Activated naive CD4-positive, alpha-beta T cell treated with anti-CD3 and anti-CD28 coated beads for 36 hours (primary cell): ENCODE measurements at regions of chr1 and their contacts with region 1.

Region 1: DNA sequence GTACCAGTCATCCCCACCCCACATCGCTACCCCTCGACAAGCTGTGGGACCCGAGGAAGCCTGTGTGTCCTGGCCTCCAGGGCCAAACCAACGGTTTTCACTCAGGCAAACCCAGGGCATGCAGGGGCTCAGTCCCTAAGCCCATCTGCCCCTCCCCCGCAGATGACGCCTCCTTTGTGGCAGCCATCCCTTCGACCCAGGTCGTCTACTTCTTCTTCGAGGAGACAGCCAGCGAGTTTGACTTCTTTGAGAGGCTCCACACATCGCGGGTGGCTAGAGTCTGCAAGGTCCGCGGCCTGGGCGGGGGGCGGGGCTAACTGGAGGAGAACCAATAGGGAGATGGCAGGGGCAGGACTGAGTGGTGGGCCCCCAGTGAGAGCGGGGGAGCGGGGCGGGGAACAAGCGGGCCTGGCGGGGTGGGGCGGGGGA is 7.4 kb downstream of the SEMA4A start:
- DNase-seq: peak; percentile 73
- H3K4me3 Mint-ChIP-seq: peak overlapping the region; percentile 63
- H3K27ac Mint-ChIP-seq: peak overlapping the region; percentile 83
- H3K4me1 Mint-ChIP-seq: peaks cover 69% of the 10 kb centered on the region
- H3K27me3 Mint-ChIP-seq: no peaks in the 10 kb centered on the region

Region 2: DNA sequence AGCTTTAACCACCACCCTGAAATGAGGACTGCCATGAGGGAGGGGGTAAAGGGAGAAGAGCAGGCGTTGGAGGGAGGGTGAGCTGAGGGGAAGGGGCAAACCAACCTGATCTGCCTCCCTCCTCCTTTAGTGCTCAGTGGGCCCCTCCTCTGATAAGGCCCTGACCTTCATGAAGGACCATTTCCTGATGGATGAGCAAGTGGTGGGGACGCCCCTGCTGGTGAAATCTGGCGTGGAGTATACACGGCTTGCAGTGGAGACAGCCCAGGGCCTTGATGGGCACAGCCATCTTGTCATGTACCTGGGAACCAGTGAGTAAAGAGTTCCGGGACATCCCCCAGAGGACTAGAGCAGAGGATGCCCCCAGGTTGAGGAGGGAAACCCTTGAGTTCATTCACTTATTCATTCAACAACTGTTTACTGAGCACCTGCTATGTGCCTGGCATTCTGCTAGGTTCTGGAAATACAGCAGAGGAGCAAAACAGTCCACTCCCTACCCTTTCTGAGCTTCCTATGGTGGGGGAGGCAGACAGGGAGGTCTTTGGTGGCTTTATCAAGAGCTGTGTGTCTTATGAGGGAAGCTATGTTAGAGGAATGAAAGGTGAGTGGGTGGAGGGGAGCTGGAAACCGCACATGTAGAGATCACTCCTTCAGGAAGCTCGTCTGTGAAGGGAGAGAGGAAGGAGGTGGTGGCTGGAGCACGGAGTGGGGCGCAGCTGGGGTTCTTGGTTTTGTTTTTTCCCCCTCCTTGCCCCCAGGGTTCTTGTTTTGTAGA is 12.1 kb after region 1 on chr1:
- CTCF ChIA-PET with region 1: interaction called, 14 read pairs
- intact Hi-C with region 1: no loop called
- DNase-seq: no peak
- H3K4me3 Mint-ChIP-seq: no peak overlapping the region
- H3K27ac Mint-ChIP-seq: no peak overlapping the region
- H3K4me1 Mint-ChIP-seq: peaks cover 13% of the 10 kb centered on the region
- H3K27me3 Mint-ChIP-seq: no peaks in the 10 kb centered on the region

Region 3: DNA sequence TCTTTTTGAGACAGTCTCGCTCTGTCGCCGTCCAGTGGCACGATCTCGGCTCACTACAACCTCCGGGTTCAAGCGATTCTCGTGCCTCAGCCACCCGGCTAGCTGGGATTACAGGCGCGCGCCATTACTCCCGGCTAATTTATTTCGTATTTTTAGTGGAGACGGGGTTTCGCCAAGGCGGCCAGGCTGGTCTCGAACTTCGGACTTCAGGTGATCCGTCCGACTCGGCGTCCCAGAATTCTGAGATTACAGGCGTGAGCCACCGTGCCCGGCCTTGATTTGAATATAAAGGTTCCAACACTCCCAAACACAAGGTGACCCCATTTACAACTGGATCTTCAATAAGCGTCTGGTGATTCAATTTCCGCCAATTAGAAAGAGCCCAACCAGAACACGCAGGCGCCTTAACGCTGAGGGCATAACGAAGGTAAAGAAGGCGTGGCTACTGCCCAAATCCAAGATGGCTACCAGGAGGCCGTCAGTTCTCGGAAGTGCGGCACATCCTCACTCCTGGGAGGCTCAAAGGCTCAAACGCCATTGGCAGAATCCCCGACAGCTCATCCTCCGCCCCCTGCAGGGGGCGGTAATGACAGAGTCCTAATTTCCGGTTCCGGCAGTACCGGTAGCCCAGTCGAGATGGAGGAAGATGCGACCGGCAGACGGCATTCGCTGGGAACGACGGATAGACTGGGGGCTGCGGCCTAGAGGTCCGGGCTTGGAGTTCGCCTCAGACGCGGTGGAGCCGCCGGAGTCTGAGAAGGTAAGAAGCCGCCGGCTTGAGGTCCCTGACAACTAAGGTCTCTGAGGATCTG is 32.9 kb after region 1 on chr1 and contains the start of gene SLC25A44:
- CTCF ChIA-PET with region 1: no interaction called
- intact Hi-C with region 1: loop called (anchors 1 kb)
- DNase-seq: peak; percentile 98
- H3K4me3 Mint-ChIP-seq: peak within 1 kb of the TSS; percentile 79
- H3K27ac Mint-ChIP-seq: peak within 1 kb of the TSS; percentile 74
- H3K4me1 Mint-ChIP-seq: peaks cover 59% of the 10 kb centered on the region
- H3K27me3 Mint-ChIP-seq: no peaks in the 10 kb centered on the region
- total RNA-seq, gene SLC25A44: 69.1 to 73.5 TPM

Region 4: GRCh38 chr1:156198831-156199349 is 38.1 kb after region 1 on chr1:
- CTCF ChIA-PET with region 1: no interaction called
- intact Hi-C with region 1: loop called (anchors 1 kb)
- DNase-seq: peak; percentile 72
- H3K4me3 Mint-ChIP-seq: no peak overlapping the region
- H3K27ac Mint-ChIP-seq: no peak overlapping the region
- H3K4me1 Mint-ChIP-seq: peaks cover 66% of the 10 kb centered on the region
- H3K27me3 Mint-ChIP-seq: no peaks in the 10 kb centered on the region

Region 5: DNA sequence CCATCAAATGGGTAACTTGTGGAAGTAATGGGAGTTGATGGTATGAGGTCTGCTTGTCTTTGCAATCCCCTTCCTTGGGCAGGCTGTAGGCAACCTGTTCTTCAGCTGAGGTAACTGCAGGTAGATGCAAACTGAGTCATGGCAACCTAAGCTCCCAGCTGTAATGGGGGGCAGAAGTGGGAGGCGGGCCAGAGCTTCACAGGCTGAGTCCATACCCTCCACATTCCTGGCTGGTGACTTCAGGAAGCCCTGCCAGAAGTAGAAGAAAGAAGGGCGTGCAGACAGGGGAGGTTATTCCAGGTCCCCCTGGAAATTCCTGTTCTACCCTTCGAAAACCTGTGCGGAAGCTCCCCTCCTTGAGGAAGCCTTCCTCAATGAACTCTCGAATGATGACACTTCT is 839.9 kb after region 1 on chr1:
- CTCF ChIA-PET with region 1: no interaction called
- intact Hi-C with region 1: no loop called
- DNase-seq: no peak
- H3K4me3 Mint-ChIP-seq: no peak overlapping the region
- H3K27ac Mint-ChIP-seq: no peak overlapping the region
- H3K4me1 Mint-ChIP-seq: no peaks in the 10 kb centered on the region
- H3K27me3 Mint-ChIP-seq: no peaks in the 10 kb centered on the region